Kidney (tissue), 22 donors: ENCODE measurements at regions of chr20 and their contacts with region 1.

Region 1: GRCh38 chr20:22918286-22918983 is 116.7 kb upstream of the SSTR4 start:
- DNase-seq: peak in 1 of 5 donors; percentile 21
- H3K4me3 ChIP-seq: no peak overlapping the region
- H3K27ac ChIP-seq: no peak overlapping the region
- H3K4me1 ChIP-seq: no peaks in the 10 kb centered on the region
- H3K27me3 ChIP-seq: no peaks in the 10 kb centered on the region
- CTCF ChIP-seq: no peak

Region 2: GRCh38 chr20:23027721-23028120 is 109.3 kb after region 1 on chr20:
- intact Hi-C with region 1: loop called (anchors 10 kb)
- DNase-seq: no peak
- H3K4me3 ChIP-seq: no peak overlapping the region
- H3K27ac ChIP-seq: no peak overlapping the region
- H3K4me1 ChIP-seq: no peaks in the 10 kb centered on the region
- H3K27me3 ChIP-seq: no peaks in the 10 kb centered on the region
- CTCF ChIP-seq: no peak